Psoas muscle (tissue), 8 donors: ENCODE measurements at regions of chr10 and their contacts with region 1.

Region 1: DNA sequence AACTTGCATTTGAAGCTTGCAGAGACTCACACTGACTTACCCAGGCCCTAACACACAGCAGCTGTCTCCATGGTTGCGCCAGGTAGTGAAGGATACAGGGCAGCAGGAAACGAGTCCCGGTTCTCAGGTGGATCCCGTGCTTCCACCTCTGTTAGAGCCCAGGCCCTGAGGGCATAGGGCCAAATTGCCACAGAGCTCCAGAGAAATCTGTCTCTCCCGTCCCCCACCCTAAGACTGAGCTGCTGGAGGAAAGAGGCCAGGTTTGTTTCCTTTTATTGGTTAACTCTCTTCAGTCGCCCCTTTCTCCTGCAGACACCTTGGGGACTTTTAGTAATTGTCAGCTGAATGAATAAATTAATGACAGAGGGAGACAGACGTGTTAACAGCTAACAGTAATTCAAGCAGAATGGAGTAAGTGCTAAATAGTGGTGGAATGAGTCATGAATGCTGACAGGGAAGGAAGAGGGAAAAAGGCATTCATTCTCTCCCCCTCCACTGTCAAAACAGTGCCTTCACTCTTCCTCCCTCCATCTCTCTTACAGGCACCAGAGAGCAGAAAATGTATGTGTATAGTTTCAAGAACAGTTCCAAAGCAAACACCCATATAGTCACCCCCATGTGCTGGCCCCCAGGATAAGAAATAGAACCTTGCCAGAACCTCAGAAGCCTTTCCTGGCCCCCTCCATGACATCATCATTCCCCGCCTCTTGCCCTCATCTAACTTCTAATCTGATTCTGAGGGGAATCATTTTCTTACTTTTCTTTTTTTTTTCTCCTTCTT is 16.8 kb upstream of the DLG5 start:
- DNase-seq: peak in 1 of 2 donors; percentile 20
- ATAC-seq: peak; percentile 84 to 89 (median 86)
- H3K4me3 ChIP-seq: no peak overlapping the region
- H3K27ac ChIP-seq: peak overlapping the region; percentile 61
- H3K4me1 ChIP-seq: peaks cover 18% of the 10 kb centered on the region
- H3K27me3 ChIP-seq: no peaks in the 10 kb centered on the region
- CTCF ChIP-seq: no peak

Region 2: DNA sequence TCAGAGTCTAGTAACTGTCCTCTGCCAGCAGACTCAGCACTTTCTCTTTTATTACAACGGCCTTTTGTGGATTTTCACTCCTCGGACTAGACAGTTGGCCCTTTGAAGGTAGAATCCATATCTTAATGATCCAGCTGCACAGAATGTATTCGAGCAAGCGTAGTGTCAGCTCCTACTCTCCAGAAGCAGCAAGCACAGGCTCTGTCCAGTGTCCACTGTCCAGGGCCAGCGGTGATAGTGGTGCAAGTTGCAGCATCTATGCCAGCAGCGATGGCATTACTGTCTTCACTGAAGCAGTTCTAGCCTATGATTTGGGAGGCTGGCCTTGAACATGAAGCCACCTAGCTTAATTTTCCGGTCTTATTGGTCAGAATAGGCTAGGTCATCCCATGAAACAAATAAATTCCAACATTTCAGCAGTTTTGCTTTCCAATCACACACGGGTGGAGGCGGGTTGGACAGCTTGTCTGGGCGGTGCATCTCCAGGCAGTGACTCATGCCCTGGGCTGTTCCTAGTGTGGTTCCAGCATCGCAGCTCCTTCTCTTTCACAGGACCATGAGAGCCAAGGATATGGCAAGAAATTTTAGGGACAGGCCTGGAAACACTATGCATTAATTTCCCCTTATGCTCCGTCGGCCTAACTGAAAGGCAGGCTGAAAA is 197.1 kb before region 1 on chr10:
- intact Hi-C with region 1: no loop called
- DNase-seq: peak in 1 of 2 donors; percentile 25
- ATAC-seq: no peak
- H3K4me3 ChIP-seq: no peak overlapping the region
- H3K27ac ChIP-seq: no peak overlapping the region
- H3K4me1 ChIP-seq: no peaks in the 10 kb centered on the region
- H3K27me3 ChIP-seq: no peaks in the 10 kb centered on the region
- CTCF ChIP-seq: no peak

Region 3: GRCh38 chr10:77901743-77902142 is 41.6 kb before region 1 on chr10:
- intact Hi-C with region 1: loop called in 1 of 2 experiments (anchors 2 kb)
- DNase-seq: peak in 1 of 2 donors; percentile 75
- ATAC-seq: peak; percentile 71 to 87 (median 79)
- H3K4me3 ChIP-seq: no peak overlapping the region
- H3K27ac ChIP-seq: peak overlapping the region; percentile 74
- H3K4me1 ChIP-seq: peaks cover 51% of the 10 kb centered on the region
- H3K27me3 ChIP-seq: no peaks in the 10 kb centered on the region
- CTCF ChIP-seq: no peak